Heart right ventricle (tissue), 16 donors: ENCODE measurements at regions of chr9 and their contacts with region 1.

Region 1: DNA sequence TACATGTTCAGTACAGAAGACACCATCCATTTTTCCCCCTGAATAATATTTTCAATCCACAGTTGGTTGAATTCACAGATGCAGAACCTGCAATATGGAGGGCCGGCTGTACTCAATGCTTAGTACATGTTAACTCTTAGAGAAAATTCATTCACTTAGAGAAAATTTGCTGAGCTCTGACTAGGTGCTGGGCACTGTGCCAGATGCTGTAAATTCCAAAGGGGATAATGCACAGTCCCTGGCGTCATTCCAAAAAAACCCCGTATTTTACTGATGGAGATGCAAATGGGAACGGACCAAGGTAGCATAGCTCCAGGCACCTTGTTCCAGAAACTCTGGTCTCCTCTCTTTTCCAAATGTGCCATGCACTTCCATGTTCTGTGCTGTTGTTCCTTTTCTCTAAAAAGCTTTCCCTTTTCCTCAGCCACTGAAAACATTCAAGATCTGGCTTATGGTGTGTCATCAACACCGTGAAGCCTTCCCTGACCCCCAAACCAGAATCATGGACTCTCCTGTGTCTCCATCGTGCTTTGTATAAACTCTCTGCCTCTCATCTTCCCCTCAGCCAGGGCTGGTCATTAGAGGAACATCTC is 55.7 kb upstream of the COL15A1 start:
- DNase-seq: no peak
- ATAC-seq: no peak
- H3K4me3 ChIP-seq: no peak overlapping the region
- H3K27ac ChIP-seq: peak overlapping the region in 8 of 10 donors; percentile 45 to 91 (median 74)
- H3K4me1 ChIP-seq: peaks cover 14 to 86% (median 69%) of the 10 kb centered on the region in 9 donors
- H3K27me3 ChIP-seq: no peaks in the 10 kb centered on the region
- CTCF ChIP-seq: no peak

Region 2: DNA sequence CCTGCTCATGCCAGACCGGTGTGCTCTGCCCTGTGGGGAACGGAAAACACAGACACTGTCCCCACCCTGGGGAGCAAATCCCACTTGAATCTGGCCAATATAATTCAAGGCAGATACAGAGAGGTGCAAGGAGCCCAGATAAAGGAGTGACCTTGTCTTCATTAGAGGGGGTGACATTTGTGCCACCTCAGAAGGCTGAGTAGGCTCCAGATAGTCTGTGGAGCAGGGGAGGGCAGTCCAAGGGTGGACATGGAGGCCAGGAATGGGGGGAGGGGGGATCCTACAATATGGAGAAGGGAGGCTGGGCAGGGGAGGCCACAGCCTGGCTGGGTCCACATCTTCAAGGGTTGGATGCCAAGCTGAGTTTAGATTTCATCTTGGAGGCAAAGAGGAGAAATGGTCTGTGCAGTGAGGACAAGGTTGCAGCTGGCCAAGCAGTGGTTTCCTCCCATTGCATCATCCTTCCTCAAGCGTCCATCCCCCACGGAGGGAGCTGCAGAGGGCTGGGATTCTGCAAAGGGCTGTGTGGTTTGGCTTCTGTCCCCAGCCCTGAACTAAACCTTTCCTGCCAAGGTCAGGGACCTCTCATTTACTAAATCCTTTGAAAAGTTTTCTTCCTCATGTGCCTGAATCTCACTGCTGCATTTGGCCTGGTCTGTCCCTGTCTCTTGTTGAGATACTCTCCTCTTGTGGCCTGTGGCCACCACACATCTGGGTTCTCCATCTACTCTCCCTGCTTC is 20.4 kb before region 1 on chr9:
- intact Hi-C with region 1: loop called in 2 of 10 experiments (anchors 2 kb)
- DNase-seq: peak; percentile 73 to 88
- ATAC-seq: peak; percentile 81 to 93 (median 89)
- H3K4me3 ChIP-seq: no peak overlapping the region
- H3K27ac ChIP-seq: peak overlapping the region; percentile 75 to 90 (median 82)
- H3K4me1 ChIP-seq: peaks cover 6 to 82% (median 63%) of the 10 kb centered on the region in 9 donors
- H3K27me3 ChIP-seq: no peaks in the 10 kb centered on the region
- CTCF ChIP-seq: no peak

Region 3: GRCh38 chr9:98873951-98874371 is 14.1 kb before region 1 on chr9:
- intact Hi-C with region 1: loop called in 1 of 10 experiments (anchors 2 kb)
- DNase-seq: peak in 1 of 2 donors; percentile 66
- ATAC-seq: peak in 7 of 8 donors; percentile 47 to 74 (median 59)
- H3K4me3 ChIP-seq: no peak overlapping the region
- H3K27ac ChIP-seq: peak overlapping the region in 2 of 10 donors; percentile 8 to 31
- H3K4me1 ChIP-seq: peaks cover 5 to 31% (median 19%) of the 10 kb centered on the region in 9 donors
- H3K27me3 ChIP-seq: no peaks in the 10 kb centered on the region
- CTCF ChIP-seq: no peak

Region 4: GRCh38 chr9:98974994-98975712 is 87.1 kb after region 1 on chr9:
- intact Hi-C with region 1: no loop called
- DNase-seq: peak; percentile 87 to 91
- ATAC-seq: peak; percentile 60 to 80 (median 72)
- H3K4me3 ChIP-seq: peak overlapping the region in 9 of 10 donors; percentile 2 to 44 (median 34)
- H3K27ac ChIP-seq: peak overlapping the region; percentile 20 to 92 (median 72)
- H3K4me1 ChIP-seq: peaks cover 33 to 100% (median 80%) of the 10 kb centered on the region in 9 donors
- H3K27me3 ChIP-seq: peaks cover 0 to 15% (median 0%) of the 10 kb centered on the region in 7 donors
- CTCF ChIP-seq: peak; percentile 98 to 100 (median 99)